ENCODE measurements at regions of chr21 and their contacts with region 1.

Region 1: DNA sequence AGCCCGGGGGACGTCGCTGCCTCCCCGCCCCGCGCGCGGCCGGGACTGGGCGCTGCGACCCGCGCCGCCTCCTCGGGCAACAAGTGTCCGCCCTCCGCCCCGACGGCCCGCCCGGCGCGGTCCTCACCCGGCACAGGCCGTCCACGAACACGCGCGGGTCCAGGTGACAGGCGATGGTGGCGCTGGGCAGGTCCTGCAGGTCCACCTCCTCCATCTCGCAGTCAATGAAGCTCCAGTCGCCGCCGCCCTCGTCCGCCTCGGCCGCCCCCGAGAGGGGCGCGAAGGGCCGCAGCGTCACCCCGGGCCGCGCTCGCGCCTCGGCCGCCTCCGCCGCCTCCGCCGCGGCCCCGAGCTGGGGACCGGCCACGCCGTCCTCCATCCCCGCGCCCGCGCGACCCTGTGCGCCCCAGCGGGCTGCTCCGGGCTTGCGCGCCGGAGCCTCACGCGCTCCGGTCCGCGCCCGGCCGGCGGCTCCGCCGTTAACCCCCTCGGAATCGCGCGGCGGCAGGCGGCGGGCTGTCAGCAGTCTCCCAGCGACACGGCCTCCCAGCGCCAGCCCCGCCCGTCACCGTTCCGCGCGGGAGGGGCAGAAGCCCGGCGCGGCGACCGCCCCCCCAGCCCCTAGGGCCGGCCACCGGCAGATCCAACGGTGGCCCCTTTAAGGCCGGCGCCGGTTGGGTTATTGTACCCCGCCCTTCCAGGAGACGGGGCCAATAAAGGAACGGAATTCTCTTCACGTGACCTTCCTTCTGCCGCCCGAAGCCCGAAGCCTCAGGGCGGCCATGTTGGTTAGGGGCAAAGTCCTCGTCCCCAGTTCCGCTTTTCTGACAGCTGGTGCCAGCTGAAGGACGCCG is at the start of gene RCAN1:
- DNase-seq: peak; percentile 91
- H3K4me3 ChIP-seq: peak within 1 kb of the TSS; percentile 75 to 87 (median 81)
- H3K27ac ChIP-seq: peak within 1 kb of the TSS; percentile 11
- H3K4me1 ChIP-seq: no peaks in the 10 kb centered on the region
- H3K27me3 ChIP-seq: no peaks in the 10 kb centered on the region
- CTCF ChIP-seq: no peak
- total RNA-seq, gene RCAN1: 28.8 to 60.7 TPM

Region 2: GRCh38 chr21:33915368-33916199 is 699.3 kb before region 1 on chr21 and contains the start of gene ATP5PO:
- CTCF ChIA-PET with region 1: no interaction called
- dilution Hi-C with region 1: no loop called
- in situ Hi-C with region 1: loop called in 1 of 2 experiments (anchors 25 kb)
- intact Hi-C with region 1: no loop called
- DNase-seq: peak; percentile 94
- H3K4me3 ChIP-seq: peak within 1 kb of the TSS; percentile 81 to 98 (median 91)
- H3K27ac ChIP-seq: peak within 1 kb of the TSS; percentile 77
- H3K4me1 ChIP-seq: peaks cover 14% of the 10 kb centered on the region
- H3K27me3 ChIP-seq: no peaks in the 10 kb centered on the region
- CTCF ChIP-seq: no peak
- total RNA-seq, gene ATP5PO: 84.7 to 157 TPM

Region 3: GRCh38 chr21:34545079-34545884 is 69.6 kb before region 1 on chr21:
- CTCF ChIA-PET with region 1: no interaction called
- dilution Hi-C with region 1: no loop called
- in situ Hi-C with region 1: no loop called
- intact Hi-C with region 1: no loop called
- DNase-seq: peak; percentile 25
- H3K4me3 ChIP-seq: no peak overlapping the region
- H3K27ac ChIP-seq: peak overlapping the region; percentile 2
- H3K4me1 ChIP-seq: peaks cover 11% of the 10 kb centered on the region
- H3K27me3 ChIP-seq: no peaks in the 10 kb centered on the region
- CTCF ChIP-seq: no peak

Region 4: DNA sequence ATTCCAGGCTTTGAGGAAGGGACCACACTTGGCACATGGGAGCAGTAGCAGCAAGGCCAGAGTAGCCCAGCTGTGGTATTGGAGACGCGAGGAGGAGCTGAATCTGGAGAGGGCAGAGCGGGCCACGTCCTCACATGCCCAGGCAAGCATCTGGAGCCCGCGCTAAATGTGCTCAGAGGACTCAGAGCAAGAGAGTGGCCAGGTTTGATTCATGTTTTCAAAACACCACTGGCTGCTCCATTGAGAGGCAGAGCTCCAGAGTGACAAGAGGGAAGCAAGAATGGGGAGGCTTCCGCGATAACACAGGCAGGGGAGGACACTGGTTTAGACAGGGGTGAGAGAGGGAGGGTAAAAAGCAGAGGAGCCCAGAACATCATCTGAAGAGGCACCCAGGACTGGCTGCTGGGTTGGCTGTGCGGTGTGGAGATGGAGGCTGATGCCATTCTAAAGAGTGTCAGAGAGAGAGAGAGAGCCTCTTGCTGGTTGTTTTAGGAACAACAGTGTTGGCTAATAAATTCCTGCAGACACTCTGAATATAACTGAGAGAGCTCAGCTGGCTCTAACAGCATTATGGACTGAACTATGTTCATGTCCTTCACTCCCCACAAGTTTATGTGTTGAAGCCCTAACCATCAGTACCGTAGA is 32.2 kb before region 1 on chr21:
- CTCF ChIA-PET with region 1: no interaction called
- dilution Hi-C with region 1: no loop called
- in situ Hi-C with region 1: no loop called
- intact Hi-C with region 1: no loop called
- DNase-seq: peak; percentile 88
- H3K4me3 ChIP-seq: no peak overlapping the region
- H3K27ac ChIP-seq: peak overlapping the region; percentile 47
- H3K4me1 ChIP-seq: peaks cover 45% of the 10 kb centered on the region
- H3K27me3 ChIP-seq: no peaks in the 10 kb centered on the region
- CTCF ChIP-seq: peak; percentile 53 to 70

Measured in mammary epithelial cell (primary cell).